ENCODE measurements at regions of chr18 and their contacts with region 1.

Region 1: GRCh38 chr18:28086670-28087552 is 90.0 kb downstream of the CDH2 start:
- DNase-seq: peak; percentile 65
- ATAC-seq: peak; percentile 87

Region 2: GRCh38 chr18:28013066-28013465 is 73.8 kb before region 1 on chr18:
- intact Hi-C with region 1: loop called (anchors 10 kb)
- DNase-seq: no peak
- ATAC-seq: no peak

Measured in Right ventricle myocardium inferior (tissue), 1 donor.